Heart left ventricle (tissue), 16 donors: ENCODE measurements at regions of chr6 and their contacts with region 1.

Region 1: GRCh38 chr6:109382576-109383437 is 540 bp upstream of the CD164 start:
- DNase-seq: peak; percentile 94 to 97 (median 95)
- ATAC-seq: peak; percentile 92 to 95 (median 93)
- H3K4me3 ChIP-seq: peak overlapping the region; percentile 70 to 99 (median 96)
- H3K27ac ChIP-seq: peak overlapping the region; percentile 97 to 100 (median 99)
- H3K4me1 ChIP-seq: peaks cover 0 to 44% (median 25%) of the 10 kb centered on the region in 12 donors
- H3K27me3 ChIP-seq: no peaks in the 10 kb centered on the region
- CTCF ChIP-seq: peak; percentile 34 to 74 (median 60)
- POLR2A ChIP-seq: no peak

Region 2: GRCh38 chr6:108541838-108542759 is 840.7 kb before region 1 on chr6:
- intact Hi-C with region 1: loop called in 2 of 10 experiments (anchors 10 kb)
- DNase-seq: peak; percentile 61 to 76 (median 70)
- ATAC-seq: peak; percentile 54 to 86 (median 80)
- H3K4me3 ChIP-seq: no peak overlapping the region
- H3K27ac ChIP-seq: no peak overlapping the region
- H3K4me1 ChIP-seq: peaks cover 0 to 14% (median 0%) of the 10 kb centered on the region in 12 donors
- H3K27me3 ChIP-seq: no peaks in the 10 kb centered on the region
- CTCF ChIP-seq: peak; percentile 68 to 92 (median 89)
- POLR2A ChIP-seq: no peak

Region 3: DNA sequence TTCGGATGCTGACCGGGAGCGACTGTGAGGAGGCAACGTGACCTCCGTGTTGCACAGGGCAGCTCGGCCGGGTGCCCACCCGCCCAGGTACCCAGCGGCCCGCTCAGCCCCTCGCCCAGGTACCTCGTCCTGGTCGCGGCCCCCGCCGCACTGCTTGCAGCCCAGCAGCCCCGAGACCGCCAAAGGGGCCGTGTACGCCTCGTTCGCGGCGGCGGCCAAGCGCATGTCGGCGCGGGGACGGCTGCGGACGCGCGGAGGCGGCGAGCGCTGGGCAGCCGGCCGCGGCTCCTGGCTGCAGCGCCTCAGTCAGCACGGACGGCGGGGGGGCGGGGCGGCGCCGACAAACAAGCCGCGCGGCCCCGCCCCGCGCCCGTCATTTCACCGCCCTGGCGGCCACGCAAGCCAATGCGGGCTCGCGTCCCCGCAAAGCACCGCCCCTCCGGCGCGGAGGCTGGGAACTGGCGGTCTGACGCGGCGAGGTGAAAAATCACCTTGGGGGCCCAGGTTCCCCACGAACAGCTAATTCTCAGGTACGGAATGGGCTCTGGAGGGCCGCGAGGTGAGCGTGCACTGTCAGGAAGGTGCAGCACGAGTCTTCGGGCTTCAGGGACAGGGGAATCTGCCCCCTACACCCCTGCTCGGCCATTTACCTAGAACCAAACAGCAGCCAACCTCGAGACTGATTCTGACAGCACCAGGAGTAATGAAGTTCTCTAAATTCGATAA is 373.4 kb before region 1 on chr6:
- intact Hi-C with region 1: loop called in 1 of 10 experiments (anchors 10 kb)
- DNase-seq: peak; percentile 95 to 98 (median 96)
- ATAC-seq: peak; percentile 86 to 99 (median 96)
- H3K4me3 ChIP-seq: peak overlapping the region; percentile 61 to 93 (median 85)
- H3K27ac ChIP-seq: peak overlapping the region; percentile 85 to 98 (median 93)
- H3K4me1 ChIP-seq: peaks cover 0 to 84% (median 37%) of the 10 kb centered on the region in 12 donors
- H3K27me3 ChIP-seq: no peaks in the 10 kb centered on the region
- CTCF ChIP-seq: peak in 9 of 12 donors; percentile 8 to 50 (median 29)
- POLR2A ChIP-seq: peak; percentile 73 to 96

Region 4: GRCh38 chr6:109187399-109188114 is 195.2 kb before region 1 on chr6:
- intact Hi-C with region 1: loop called (anchors 1 to 5 kb)
- DNase-seq: peak in 4 of 5 donors; percentile 24 to 63 (median 39)
- ATAC-seq: peak in 3 of 4 donors; percentile 64 to 78 (median 75)
- H3K4me3 ChIP-seq: no peak overlapping the region
- H3K27ac ChIP-seq: no peak overlapping the region
- H3K4me1 ChIP-seq: peaks cover 0 to 5% (median 0%) of the 10 kb centered on the region in 12 donors
- H3K27me3 ChIP-seq: peaks cover 0 to 4% (median 0%) of the 10 kb centered on the region in 9 donors
- CTCF ChIP-seq: peak; percentile 75 to 99 (median 94)
- POLR2A ChIP-seq: no peak

Region 5: GRCh38 chr6:109304284-109305015 is 78.4 kb before region 1 on chr6:
- intact Hi-C with region 1: loop called in 2 of 10 experiments (anchors 5 kb)
- DNase-seq: no peak
- ATAC-seq: no peak
- H3K4me3 ChIP-seq: no peak overlapping the region
- H3K27ac ChIP-seq: peak overlapping the region in 4 of 12 donors; percentile 1 to 47 (median 28)
- H3K4me1 ChIP-seq: peaks cover 0 to 44% (median 17%) of the 10 kb centered on the region in 12 donors
- H3K27me3 ChIP-seq: no peaks in the 10 kb centered on the region
- CTCF ChIP-seq: no peak
- POLR2A ChIP-seq: no peak

Region 6: GRCh38 chr6:109440331-109441068 is 57.7 kb after region 1 on chr6 and contains the starts of genes PPIL6 and SMPD2:
- intact Hi-C with region 1: loop called in 5 of 10 experiments (anchors 1 to 5 kb)
- DNase-seq: peak; percentile 90 to 94 (median 92)
- ATAC-seq: peak; percentile 82 to 96 (median 94)
- H3K4me3 ChIP-seq: peak within 1 kb of the TSS; percentile 69 to 97 (median 84)
- H3K27ac ChIP-seq: peak within 1 kb of the TSS; percentile 47 to 89 (median 82)
- H3K4me1 ChIP-seq: peaks cover 0 to 24% (median 15%) of the 10 kb centered on the region in 12 donors
- H3K27me3 ChIP-seq: no peaks in the 10 kb centered on the region
- CTCF ChIP-seq: peak; percentile 16 to 68 (median 44)
- POLR2A ChIP-seq: peak in 1 of 2 donors; percentile 69
- total RNA-seq, gene PPIL6: 1.5 to 6.5 (median 3.4) TPM
- total RNA-seq, gene SMPD2: 2.0 to 7.1 (median 4.1) TPM

Region 7: GRCh38 chr6:109482905-109483735 is 100.3 kb after region 1 on chr6 and contains the start of gene ZBTB24:
- intact Hi-C with region 1: loop called in 3 of 10 experiments (anchors 1 to 10 kb)
- DNase-seq: peak; percentile 91 to 97 (median 94)
- ATAC-seq: peak; percentile 90 to 97 (median 97)
- H3K4me3 ChIP-seq: peak within 1 kb of the TSS; percentile 83 to 100 (median 98)
- H3K27ac ChIP-seq: peak within 1 kb of the TSS in 11 of 12 donors; percentile 59 to 87 (median 81)
- H3K4me1 ChIP-seq: peaks cover 0 to 48% (median 39%) of the 10 kb centered on the region in 12 donors
- H3K27me3 ChIP-seq: no peaks in the 10 kb centered on the region
- CTCF ChIP-seq: no peak
- POLR2A ChIP-seq: peak in 1 of 2 donors; percentile 90
- total RNA-seq, gene ZBTB24: 2.4 to 4.8 (median 3.1) TPM

Region 8: GRCh38 chr6:109503327-109504224 is 120.8 kb after region 1 on chr6:
- intact Hi-C with region 1: no loop called
- DNase-seq: no peak
- ATAC-seq: no peak
- H3K4me3 ChIP-seq: no peak overlapping the region
- H3K27ac ChIP-seq: no peak overlapping the region
- H3K4me1 ChIP-seq: no peaks in the 10 kb centered on the region
- H3K27me3 ChIP-seq: no peaks in the 10 kb centered on the region
- CTCF ChIP-seq: no peak
- POLR2A ChIP-seq: no peak

Region 9: GRCh38 chr6:109526905-109527628 is 144.3 kb after region 1 on chr6:
- intact Hi-C with region 1: no loop called
- DNase-seq: peak in 2 of 5 donors; percentile 30 to 39
- ATAC-seq: peak in 3 of 4 donors; percentile 56 to 64 (median 60)
- H3K4me3 ChIP-seq: no peak overlapping the region
- H3K27ac ChIP-seq: no peak overlapping the region
- H3K4me1 ChIP-seq: no peaks in the 10 kb centered on the region
- H3K27me3 ChIP-seq: no peaks in the 10 kb centered on the region
- CTCF ChIP-seq: peak; percentile 32 to 68 (median 51)
- POLR2A ChIP-seq: no peak

Region 10: GRCh38 chr6:109579361-109579760 is 196.6 kb after region 1 on chr6:
- intact Hi-C with region 1: no loop called
- DNase-seq: no peak
- ATAC-seq: no peak
- H3K4me3 ChIP-seq: no peak overlapping the region
- H3K27ac ChIP-seq: no peak overlapping the region
- H3K4me1 ChIP-seq: no peaks in the 10 kb centered on the region
- H3K27me3 ChIP-seq: no peaks in the 10 kb centered on the region
- CTCF ChIP-seq: no peak
- POLR2A ChIP-seq: no peak